Activated naive CD4-positive, alpha-beta T cell treated with anti-CD3 and anti-CD28 coated beads, Interleukin-2, amount 10 ng/mL, durations not matched to agents 7 days and 5 days (primary cell): ENCODE measurements at regions of chr20 and their contacts with region 1.

Region 1: DNA sequence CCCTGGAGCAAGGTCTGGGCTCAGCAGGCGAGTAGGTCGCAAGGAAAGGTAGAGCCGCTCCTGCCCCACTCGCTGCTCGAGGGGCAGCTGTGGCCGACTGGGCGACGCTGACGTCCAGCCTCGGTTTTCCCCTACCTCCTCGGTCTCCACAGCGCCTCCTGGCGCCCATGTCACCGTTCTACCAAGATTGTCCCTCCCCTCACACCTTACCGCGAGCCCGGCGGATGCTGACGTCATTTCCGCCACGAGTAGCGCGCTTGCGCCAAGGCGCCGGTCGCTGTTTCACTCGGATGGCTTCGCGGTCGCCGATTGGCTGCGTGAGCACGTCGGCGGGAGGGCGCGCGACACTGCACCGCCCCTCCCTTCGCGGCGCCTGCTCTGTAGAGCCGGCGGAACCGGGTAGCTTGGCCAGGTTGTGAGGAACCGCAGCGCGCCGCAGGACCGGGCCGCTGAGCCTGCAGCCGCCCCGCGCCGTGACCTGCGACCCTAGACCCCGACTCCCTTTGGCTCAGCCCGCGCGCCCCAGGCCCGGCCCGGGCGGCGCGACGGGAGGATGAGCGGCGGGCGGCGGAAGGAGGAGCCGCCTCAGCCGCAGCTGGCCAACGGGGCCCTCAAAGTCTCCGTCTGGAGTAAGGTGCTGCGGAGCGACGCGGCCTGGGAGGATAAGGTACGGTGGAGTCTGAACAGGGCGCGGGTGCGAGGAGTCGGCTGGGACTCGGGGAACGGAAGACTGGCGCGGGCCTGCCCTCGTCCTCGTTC is at the start of gene RAB5IF:
- DNase-seq: peak; percentile 99
- H3K4me3 Mint-ChIP-seq: peak within 1 kb of the TSS; percentile 99
- H3K27ac Mint-ChIP-seq: peak within 1 kb of the TSS; percentile 95
- H3K4me1 Mint-ChIP-seq: peaks cover 38% of the 10 kb centered on the region
- H3K27me3 Mint-ChIP-seq: peaks cover 4% of the 10 kb centered on the region

Region 2: DNA sequence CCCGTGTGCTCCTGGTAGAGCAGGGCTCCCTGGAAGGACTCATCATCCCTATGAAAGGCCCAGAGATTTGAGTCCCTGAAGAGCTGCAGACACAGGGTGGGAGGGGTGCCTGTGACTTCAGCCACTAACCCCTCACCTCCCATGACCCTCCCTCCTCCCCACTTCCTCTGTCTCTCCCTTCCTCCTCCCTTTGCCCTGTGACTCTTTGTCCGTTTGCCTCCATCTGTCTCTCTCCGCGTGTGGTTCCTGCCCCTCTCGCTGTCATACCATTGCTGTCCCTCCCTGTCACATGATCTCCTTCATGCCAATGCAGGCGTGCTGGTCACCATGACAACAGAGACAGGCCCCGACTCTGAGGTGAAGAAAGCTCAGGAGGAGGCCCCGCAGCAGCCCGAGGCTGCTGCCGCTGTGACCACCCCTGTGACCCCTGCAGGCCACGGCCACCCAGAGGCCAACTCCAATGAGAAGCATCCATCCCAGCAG is 432.1 kb before region 1 on chr20:
- CTCF ChIA-PET with region 1: no interaction called
- DNase-seq: peak; percentile 40
- H3K4me3 Mint-ChIP-seq: no peak overlapping the region
- H3K27ac Mint-ChIP-seq: peak overlapping the region; percentile 16
- H3K4me1 Mint-ChIP-seq: peaks cover 7% of the 10 kb centered on the region
- H3K27me3 Mint-ChIP-seq: peaks cover 35% of the 10 kb centered on the region

Region 3: DNA sequence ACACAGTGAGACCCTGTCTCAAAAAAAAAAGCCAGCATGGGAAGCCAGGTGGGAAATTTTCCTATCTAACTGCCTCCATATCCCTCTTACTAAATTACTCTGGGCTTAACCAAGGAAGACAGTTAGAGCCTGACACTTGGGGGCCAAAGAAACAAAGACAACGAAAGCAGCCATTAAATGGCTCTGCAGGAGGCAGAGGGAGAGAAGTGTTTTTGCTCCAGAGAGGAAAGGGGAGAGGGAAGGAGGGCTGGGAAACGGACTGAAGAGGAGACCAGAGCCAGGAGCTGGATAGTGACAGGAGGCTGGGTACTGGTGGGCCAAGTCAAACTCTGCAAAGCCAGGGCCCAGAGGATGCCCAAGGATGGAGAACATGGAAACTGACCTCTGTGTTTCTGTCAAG is 42.9 kb before region 1 on chr20:
- CTCF ChIA-PET with region 1: interaction called, 15 read pairs
- DNase-seq: no peak
- H3K4me3 Mint-ChIP-seq: no peak overlapping the region
- H3K27ac Mint-ChIP-seq: no peak overlapping the region
- H3K4me1 Mint-ChIP-seq: no peaks in the 10 kb centered on the region
- H3K27me3 Mint-ChIP-seq: peaks cover 12% of the 10 kb centered on the region

Region 4: DNA sequence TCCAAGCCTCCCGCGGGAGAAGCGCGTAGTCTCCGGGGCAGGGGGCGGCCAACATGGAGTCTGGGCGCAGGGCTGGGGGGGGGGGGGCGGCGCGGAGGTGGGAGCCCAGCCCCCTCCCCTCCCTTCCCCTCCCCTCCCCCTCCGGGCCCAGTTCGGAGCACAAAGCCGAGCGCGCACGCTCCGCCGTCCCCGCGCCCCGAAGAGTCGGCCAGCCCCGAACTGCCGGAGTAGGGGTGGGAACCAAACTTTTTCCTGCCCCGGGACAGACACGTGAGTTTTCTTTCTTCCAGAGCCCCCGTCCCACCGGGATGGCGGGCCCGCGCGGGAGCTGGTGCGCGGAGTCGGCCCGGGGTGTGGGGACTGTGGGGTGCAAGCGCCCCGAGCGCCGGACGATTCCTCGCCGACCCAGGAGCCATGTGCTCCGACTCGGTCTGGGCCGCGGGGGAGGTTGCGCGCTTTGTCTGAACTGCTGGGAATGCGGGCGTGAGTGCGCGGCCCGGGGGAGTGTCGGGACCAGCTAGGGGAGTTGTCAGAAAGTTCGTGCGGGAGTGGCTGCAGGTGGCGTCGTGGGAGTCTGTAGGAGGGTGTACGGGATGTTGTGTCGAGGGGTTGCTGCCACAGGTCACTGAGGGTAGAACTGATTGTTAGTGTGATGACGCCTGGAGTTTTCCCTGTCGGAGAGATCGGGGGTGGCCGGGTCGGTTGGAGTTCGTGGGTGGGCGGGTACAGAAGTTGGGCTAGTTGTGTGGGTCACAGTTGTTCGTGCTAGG is 31.0 kb before region 1 on chr20:
- CTCF ChIA-PET with region 1: interaction called, 18 read pairs
- DNase-seq: peak; percentile 69
- H3K4me3 Mint-ChIP-seq: peak overlapping the region; percentile 87
- H3K27ac Mint-ChIP-seq: peak overlapping the region; percentile 90
- H3K4me1 Mint-ChIP-seq: peaks cover 37% of the 10 kb centered on the region
- H3K27me3 Mint-ChIP-seq: peaks cover 5% of the 10 kb centered on the region

Region 5: DNA sequence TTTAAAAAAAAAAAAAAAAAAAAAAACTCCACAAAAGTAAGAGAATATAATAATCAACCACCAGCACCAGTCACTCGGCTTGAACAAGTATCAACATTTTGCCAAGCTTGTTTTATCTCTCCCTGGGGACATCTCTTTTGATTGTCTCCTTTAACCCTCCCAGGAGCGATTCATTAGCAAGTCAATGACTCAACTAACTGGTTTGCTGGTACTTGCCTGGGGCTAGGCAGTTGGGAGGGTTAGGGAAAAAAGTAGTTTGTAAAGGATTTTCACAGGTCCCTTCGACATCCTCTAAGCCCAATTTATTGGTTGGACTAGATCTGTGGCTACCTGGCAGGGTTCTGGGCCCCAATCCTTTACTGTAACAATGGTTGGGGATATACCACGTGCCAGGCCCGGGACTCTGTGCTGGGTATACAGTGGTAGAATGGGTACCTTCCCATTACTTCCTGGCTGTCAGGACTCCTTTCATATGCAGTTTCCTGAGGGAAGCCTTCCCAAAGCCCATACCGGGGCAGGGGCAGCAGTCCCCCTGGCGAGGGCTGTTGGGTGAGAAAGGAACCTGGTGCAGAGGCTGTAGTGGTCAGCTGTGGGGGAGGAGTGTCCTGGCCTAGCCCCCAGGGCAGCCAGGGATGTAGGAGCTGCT is 20.0 kb before region 1 on chr20:
- CTCF ChIA-PET with region 1: interaction called, 51 read pairs
- DNase-seq: no peak
- H3K4me3 Mint-ChIP-seq: no peak overlapping the region
- H3K27ac Mint-ChIP-seq: no peak overlapping the region
- H3K4me1 Mint-ChIP-seq: peaks cover 27% of the 10 kb centered on the region
- H3K27me3 Mint-ChIP-seq: no peaks in the 10 kb centered on the region

Region 6: DNA sequence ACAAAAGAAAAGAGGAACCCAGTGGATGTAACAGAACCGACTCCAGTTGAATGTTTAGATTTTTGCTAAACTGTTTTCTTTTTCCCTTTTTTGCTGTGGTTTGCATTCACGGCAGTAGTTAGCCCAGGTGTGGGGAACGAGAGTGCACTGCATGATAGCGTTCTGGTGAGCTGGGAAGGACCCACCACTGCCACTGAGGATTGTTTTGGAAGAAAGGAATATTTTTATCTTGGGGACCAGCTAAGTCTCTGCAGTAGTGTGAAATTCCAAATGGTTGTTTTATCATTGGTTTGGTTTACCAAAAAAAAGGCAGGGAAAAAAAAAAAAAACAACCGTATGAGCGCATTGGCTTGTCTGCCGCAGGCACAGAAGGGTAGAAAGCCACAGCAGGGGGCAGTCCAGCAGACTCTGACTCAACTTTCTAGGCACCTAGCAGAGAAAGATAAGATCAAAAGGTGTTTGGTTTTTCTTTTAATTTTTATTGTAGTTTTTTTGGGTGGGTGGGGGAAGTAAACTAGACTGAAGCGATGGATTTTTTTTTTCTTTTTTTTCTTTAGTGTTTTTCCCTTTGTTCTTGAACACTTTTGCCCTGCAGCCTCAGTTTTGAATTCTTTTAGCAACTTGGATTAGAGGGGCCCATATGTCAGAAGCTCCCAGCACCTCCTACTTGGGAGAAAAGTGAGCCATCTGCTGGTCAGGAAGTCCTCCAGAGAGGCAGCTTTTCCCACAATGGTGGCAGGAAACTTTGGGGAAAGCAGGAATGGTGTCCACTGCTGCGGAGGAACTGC is 13.5 kb before region 1 on chr20:
- CTCF ChIA-PET with region 1: interaction called, 51 read pairs
- DNase-seq: peak; percentile 76
- H3K4me3 Mint-ChIP-seq: peak overlapping the region; percentile 38
- H3K27ac Mint-ChIP-seq: peak overlapping the region; percentile 85
- H3K4me1 Mint-ChIP-seq: peaks cover 62% of the 10 kb centered on the region
- H3K27me3 Mint-ChIP-seq: no peaks in the 10 kb centered on the region

Region 7: DNA sequence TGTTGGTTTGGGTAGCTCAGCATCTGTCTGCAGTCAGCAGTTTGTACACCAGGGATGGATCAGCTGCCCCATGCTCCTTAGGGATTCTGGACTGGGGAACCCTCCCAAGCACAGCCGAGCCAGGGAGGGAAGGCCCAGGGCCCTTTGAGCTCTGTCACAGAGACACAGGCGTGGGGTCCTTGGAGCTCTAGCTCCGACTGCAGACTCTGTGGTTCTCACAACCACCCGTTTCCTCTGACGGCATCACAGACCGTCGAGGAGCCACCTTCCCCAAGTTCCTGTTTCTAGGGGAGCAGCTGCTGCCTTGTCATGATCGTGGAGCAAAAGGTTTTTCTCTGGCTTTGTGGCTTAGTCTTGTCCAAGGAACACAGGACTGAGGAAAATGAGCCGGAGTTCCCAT is 40.4 kb after region 1 on chr20 and contains the start of gene SLA2:
- CTCF ChIA-PET with region 1: interaction called, 11 read pairs
- DNase-seq: peak; percentile 80
- H3K4me3 Mint-ChIP-seq: peak within 1 kb of the TSS; percentile 96
- H3K27ac Mint-ChIP-seq: peak within 1 kb of the TSS; percentile 97
- H3K4me1 Mint-ChIP-seq: peaks cover 54% of the 10 kb centered on the region
- H3K27me3 Mint-ChIP-seq: no peaks in the 10 kb centered on the region

Region 8: DNA sequence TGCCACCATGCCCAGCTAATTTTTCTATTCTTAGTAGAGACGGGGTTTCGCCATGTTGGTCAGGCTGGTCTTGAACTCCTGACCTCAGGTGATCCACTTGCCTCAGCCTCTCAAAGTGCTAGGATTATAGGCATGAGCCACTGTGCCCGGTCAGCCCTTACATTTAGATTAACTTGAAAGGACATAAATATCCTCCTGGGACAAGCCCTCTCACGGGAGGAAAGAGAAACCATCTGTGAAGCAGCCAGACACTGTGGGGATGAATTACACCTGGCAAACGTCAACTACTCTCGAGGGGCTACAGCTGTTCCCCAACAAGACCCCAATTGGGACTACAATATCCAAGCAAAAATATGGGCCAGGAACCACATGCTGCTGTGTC is 378.7 kb after region 1 on chr20:
- CTCF ChIA-PET with region 1: no interaction called
- DNase-seq: no peak
- H3K4me3 Mint-ChIP-seq: no peak overlapping the region
- H3K27ac Mint-ChIP-seq: no peak overlapping the region
- H3K4me1 Mint-ChIP-seq: peaks cover 18% of the 10 kb centered on the region
- H3K27me3 Mint-ChIP-seq: no peaks in the 10 kb centered on the region